Tibial artery (tissue), 4 donors: ENCODE measurements at regions of chr11 and their contacts with region 1.

Region 1: DNA sequence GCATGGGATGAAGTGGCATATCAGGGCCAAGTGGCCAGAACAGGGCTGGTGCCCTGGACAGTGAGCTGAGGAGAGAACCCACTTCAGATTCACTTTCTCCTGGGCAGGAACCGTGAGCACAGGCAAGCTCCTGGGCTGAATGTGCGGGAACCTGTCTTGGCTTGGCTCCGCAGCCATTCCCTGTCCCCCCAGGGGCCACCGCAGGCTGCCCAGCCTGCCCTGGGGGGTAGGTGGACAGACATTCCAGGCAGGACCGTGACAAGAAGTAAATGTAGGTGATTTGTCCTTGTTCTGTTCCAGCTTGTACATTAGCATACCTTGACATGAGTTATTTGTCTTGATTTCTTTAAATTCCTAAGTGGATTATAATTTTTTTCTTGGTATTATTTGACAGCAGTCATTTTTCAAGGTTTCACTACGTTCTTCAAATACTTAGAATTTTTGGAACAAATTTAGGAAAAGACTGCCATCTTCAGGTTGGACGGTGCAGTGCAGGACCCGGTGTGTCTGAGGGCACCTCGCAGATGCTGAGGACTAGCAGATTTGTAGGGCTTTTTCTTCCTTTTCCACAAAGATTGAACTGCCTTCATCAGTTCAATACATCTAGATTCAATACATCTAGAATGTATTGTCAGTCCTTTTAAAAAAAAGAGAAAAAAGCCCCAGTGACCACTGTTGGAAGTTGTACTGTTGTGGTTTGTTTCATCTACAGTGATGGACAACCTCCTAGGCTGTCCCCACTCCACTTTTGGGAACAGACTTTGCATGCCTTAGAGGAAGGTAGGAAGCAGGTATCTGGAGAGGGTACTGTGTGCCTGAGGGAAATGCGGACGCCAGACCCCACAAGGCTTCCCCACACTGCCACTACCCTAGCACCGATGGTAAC is 115.1 kb upstream of the RASSF10 start:
- DNase-seq: peak; percentile 55 to 75
- H3K4me3 ChIP-seq: no peak overlapping the region
- H3K27ac ChIP-seq: peak overlapping the region in 1 of 2 donors; percentile 23
- H3K4me1 ChIP-seq: peaks cover 0 to 47% (median 45%) of the 10 kb centered on the region in 4 donors
- H3K27me3 ChIP-seq: no peaks in the 10 kb centered on the region
- CTCF ChIP-seq: peak; percentile 83 to 87

Region 2: GRCh38 chr11:12411806-12412727 is 482.0 kb before region 1 on chr11:
- intact Hi-C with region 1: loop called (anchors 5 kb)
- DNase-seq: peak; percentile 81 to 88
- H3K4me3 ChIP-seq: peak overlapping the region in 1 of 2 donors; percentile 13
- H3K27ac ChIP-seq: peak overlapping the region; percentile 76 to 83
- H3K4me1 ChIP-seq: peaks cover 3 to 99% (median 70%) of the 10 kb centered on the region in 4 donors
- H3K27me3 ChIP-seq: no peaks in the 10 kb centered on the region
- CTCF ChIP-seq: peak; percentile 77 to 84